ENCODE measurements at regions of chr12 and their contacts with region 1.

Region 1: GRCh38 chr12:64890873-64891468 is 66.5 kb downstream of the TBC1D30 start:
- DNase-seq: no peak
- ATAC-seq: peak in 3 of 4 donors; percentile 53 to 64 (median 61)
- H3K4me3 ChIP-seq: no peak overlapping the region
- H3K27ac ChIP-seq: no peak overlapping the region
- H3K4me1 ChIP-seq: no peaks in the 10 kb centered on the region
- H3K27me3 ChIP-seq: peaks cover 0 to 11% (median 0%) of the 10 kb centered on the region in 9 donors
- CTCF ChIP-seq: peak; percentile 71 to 90 (median 80)
- POLR2A ChIP-seq: no peak

Region 2: GRCh38 chr12:65113621-65114035 is 222.7 kb after region 1 on chr12:
- intact Hi-C with region 1: loop called in 6 of 10 experiments (anchors 5 to 10 kb)
- DNase-seq: no peak
- ATAC-seq: no peak
- H3K4me3 ChIP-seq: no peak overlapping the region
- H3K27ac ChIP-seq: no peak overlapping the region
- H3K4me1 ChIP-seq: no peaks in the 10 kb centered on the region
- H3K27me3 ChIP-seq: peaks cover 0 to 54% (median 16%) of the 10 kb centered on the region in 9 donors
- CTCF ChIP-seq: no peak
- POLR2A ChIP-seq: no peak

Region 3: GRCh38 chr12:65232476-65233077 is 341.6 kb after region 1 on chr12:
- intact Hi-C with region 1: loop called (anchors 5 kb)
- DNase-seq: no peak
- ATAC-seq: no peak
- H3K4me3 ChIP-seq: no peak overlapping the region
- H3K27ac ChIP-seq: no peak overlapping the region
- H3K4me1 ChIP-seq: peaks cover 0 to 5% (median 0%) of the 10 kb centered on the region in 12 donors
- H3K27me3 ChIP-seq: no peaks in the 10 kb centered on the region
- CTCF ChIP-seq: peak; percentile 33 to 71 (median 55)
- POLR2A ChIP-seq: no peak

Region 4: DNA sequence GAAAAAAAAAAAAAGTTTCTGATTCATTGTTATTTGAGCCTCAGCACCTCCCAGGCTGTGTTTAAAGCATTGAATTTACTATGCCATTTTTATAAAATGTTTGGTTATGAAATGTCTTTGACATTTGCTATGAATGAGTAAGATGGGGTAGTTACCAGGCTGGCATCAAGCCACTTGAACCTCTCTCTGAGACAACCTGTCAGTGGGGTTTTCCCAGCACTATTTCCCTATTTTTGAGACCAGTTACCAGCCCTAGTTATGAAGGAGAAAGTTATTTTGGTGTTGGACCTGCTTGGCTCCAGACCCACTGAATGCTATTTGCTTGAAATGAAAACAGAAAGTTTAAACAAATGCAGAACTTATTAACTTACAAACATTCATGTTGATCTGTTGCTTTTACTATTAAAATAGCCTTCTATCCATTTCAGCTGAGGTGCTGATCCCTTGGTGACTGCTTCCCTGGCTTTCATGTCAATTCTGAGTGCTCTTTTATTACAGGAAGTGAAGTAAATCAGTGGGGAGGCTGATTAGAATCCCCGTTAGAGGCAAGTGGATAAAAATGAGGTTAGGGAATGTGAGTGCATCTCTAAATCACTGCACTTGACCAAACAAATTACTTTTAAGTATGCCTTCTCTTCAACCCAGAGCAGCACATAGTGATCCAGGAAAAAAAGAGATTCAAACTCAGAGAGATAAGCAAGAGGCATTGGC is 1201.7 kb after region 1 on chr12:
- intact Hi-C with region 1: loop called in 4 of 10 experiments (anchors 2 to 5 kb)
- DNase-seq: no peak
- ATAC-seq: no peak
- H3K4me3 ChIP-seq: no peak overlapping the region
- H3K27ac ChIP-seq: no peak overlapping the region
- H3K4me1 ChIP-seq: peaks cover 0 to 11% (median 0%) of the 10 kb centered on the region in 12 donors
- H3K27me3 ChIP-seq: no peaks in the 10 kb centered on the region
- CTCF ChIP-seq: no peak
- POLR2A ChIP-seq: no peak

Region 5: GRCh38 chr12:66119870-66120241 is 1228.9 kb after region 1 on chr12:
- intact Hi-C with region 1: loop called in 1 of 10 experiments (anchors 10 kb)
- DNase-seq: no peak
- ATAC-seq: no peak
- H3K4me3 ChIP-seq: no peak overlapping the region
- H3K27ac ChIP-seq: no peak overlapping the region
- H3K4me1 ChIP-seq: no peaks in the 10 kb centered on the region
- H3K27me3 ChIP-seq: no peaks in the 10 kb centered on the region
- CTCF ChIP-seq: no peak
- POLR2A ChIP-seq: no peak